ENCODE measurements at regions of chr1 and their contacts with region 1.

Region 1: GRCh38 chr1:212791676-212792395 is at the starts of genes NSL1 and TATDN3:
- DNase-seq: peak; percentile 94
- H3K4me3 Mint-ChIP-seq: peak within 1 kb of the TSS; percentile 99
- H3K27ac Mint-ChIP-seq: peak within 1 kb of the TSS; percentile 90
- H3K4me1 Mint-ChIP-seq: peaks cover 33% of the 10 kb centered on the region
- H3K27me3 Mint-ChIP-seq: no peaks in the 10 kb centered on the region
- total RNA-seq, gene NSL1: 21.2 to 23.7 TPM
- total RNA-seq, gene TATDN3: 14.9 to 16.9 TPM

Region 2: DNA sequence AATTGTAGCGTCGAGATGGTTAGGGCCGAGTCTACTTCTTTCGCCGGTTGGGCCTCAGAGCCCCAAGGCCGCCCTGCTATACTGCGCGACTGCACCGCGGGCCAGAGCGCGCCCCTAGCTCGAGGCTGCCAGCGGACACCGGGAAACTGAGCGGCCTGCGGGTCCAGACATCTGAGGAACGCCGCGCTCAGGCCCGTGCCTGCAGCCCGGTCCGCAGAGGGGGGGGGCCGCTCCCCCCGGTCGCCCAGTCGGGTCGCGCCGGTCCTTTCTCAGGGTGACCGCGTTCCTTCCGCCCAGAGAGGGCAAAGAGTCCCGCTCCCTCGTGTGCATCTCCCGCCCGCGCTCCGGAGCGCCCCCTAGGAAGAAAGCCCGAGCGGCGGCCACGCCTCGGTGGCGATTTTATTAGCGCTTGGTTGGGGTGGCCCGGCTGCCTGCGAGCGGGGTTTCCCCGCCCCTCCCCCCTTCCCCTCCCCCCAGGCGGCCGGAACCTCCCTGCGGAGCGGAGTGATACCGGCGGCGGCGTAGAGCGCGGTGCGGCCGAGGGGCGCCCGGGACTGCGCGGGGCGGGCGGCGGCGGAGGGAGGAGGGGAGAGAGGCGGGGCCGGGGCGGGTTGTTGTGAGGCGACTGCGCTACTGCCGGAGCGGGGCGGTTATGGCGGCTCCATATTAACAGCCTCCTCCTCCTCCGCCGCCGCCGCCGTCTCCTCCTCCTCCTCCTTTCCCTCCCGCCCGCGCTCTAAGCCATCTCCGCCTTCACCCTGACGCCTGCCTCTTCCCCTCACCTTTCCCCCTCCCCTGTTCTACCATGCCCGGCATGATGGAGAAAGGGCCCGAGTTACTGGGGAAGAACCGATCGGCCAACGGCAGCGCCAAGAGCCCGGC is 1532.8 kb before region 1 on chr1 and contains the start of gene RCOR3:
- CTCF ChIA-PET with region 1: no interaction called
- intact Hi-C with region 1: loop called (anchors 5 kb)
- DNase-seq: peak; percentile 93
- H3K4me3 Mint-ChIP-seq: peak within 1 kb of the TSS; percentile 90
- H3K27ac Mint-ChIP-seq: peak within 1 kb of the TSS; percentile 96
- H3K4me1 Mint-ChIP-seq: peaks cover 16% of the 10 kb centered on the region
- H3K27me3 Mint-ChIP-seq: no peaks in the 10 kb centered on the region
- total RNA-seq, gene RCOR3: 28.9 to 30.8 TPM

Region 3: DNA sequence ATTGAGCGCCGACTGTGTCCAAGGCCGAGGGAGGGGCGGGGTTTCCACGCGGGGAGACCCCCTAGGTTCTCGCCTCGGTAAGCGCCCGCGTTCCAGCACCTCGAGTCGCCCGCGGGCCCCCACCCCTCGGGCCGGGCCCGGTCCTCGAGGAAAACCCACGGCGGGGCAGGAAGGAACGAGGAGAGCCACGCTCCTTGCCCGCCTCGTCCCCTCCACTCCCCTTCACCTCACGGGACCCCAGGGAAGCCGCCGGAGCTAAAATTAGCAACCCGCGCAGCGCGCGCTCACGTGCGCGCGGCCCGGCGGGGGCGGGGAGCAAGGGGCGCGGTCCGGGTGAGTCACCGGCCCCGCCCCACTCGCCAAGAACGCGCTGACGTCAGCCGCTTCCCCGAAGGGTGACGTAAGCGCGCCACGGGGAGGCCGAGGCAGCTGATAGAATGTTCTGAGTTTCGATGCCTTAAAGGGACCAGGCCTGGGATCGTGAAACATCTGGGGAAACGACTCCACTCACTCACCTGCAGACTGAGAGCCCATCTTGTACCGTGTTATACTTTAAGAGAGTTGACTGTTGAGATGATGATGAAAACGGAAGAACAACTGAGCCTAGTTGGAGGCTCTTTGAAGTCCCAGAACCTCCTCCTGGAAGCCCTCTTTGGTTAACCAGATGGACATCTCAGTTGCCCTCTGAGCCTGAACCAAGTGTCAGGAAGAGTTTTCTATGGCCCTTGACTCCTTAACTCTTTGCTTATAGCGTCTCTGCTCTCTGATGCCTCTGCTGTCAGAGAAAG is 232.9 kb before region 1 on chr1:
- CTCF ChIA-PET with region 1: no interaction called
- intact Hi-C with region 1: loop called (anchors 2 kb)
- DNase-seq: peak; percentile 94
- H3K4me3 Mint-ChIP-seq: peak overlapping the region; percentile 66
- H3K27ac Mint-ChIP-seq: peak overlapping the region; percentile 92
- H3K4me1 Mint-ChIP-seq: peaks cover 13% of the 10 kb centered on the region
- H3K27me3 Mint-ChIP-seq: peaks cover 12% of the 10 kb centered on the region

Region 4: DNA sequence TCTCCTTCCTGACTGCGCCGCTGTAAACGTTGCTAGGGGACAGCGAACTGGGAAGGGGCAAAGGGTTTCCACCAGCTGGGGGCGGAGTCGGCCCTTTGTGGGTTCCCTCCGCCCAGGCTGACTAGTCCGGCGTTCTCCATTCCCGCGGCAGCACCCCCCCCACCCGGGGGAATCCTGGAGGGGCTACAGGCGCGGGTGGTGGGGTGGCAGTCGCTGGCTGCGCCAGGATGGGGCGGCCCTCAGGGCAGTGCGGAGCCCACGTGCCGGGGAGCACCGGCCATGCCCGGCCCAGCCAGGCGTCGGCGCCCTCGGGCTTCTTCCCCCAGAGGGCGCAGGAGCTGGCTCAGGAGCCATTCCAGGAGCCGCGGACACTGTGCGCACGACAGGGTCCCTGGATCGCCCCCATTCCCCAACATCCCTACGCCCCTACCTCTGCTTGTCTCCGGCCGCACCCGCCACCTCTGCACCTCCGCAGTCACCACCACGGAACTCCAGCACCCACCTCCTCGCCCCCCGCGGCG is 92.7 kb before region 1 on chr1:
- CTCF ChIA-PET with region 1: interaction called, 5 read pairs
- intact Hi-C with region 1: loop called (anchors 2 kb)
- DNase-seq: peak; percentile 67
- H3K4me3 Mint-ChIP-seq: peak overlapping the region; percentile 87
- H3K27ac Mint-ChIP-seq: no peak overlapping the region
- H3K4me1 Mint-ChIP-seq: peaks cover 38% of the 10 kb centered on the region
- H3K27me3 Mint-ChIP-seq: peaks cover 11% of the 10 kb centered on the region

Region 5: GRCh38 chr1:212857992-212858460 is 66.2 kb after region 1 on chr1 and contains the start of gene FLVCR1:
- CTCF ChIA-PET with region 1: interaction called, 3 read pairs
- intact Hi-C with region 1: loop called (anchors 1 kb)
- DNase-seq: peak; percentile 98
- H3K4me3 Mint-ChIP-seq: peak within 1 kb of the TSS; percentile 97
- H3K27ac Mint-ChIP-seq: peak within 1 kb of the TSS; percentile 88
- H3K4me1 Mint-ChIP-seq: peaks cover 11% of the 10 kb centered on the region
- H3K27me3 Mint-ChIP-seq: no peaks in the 10 kb centered on the region
- total RNA-seq, gene FLVCR1: 6.0 to 7.3 TPM

Region 6: DNA sequence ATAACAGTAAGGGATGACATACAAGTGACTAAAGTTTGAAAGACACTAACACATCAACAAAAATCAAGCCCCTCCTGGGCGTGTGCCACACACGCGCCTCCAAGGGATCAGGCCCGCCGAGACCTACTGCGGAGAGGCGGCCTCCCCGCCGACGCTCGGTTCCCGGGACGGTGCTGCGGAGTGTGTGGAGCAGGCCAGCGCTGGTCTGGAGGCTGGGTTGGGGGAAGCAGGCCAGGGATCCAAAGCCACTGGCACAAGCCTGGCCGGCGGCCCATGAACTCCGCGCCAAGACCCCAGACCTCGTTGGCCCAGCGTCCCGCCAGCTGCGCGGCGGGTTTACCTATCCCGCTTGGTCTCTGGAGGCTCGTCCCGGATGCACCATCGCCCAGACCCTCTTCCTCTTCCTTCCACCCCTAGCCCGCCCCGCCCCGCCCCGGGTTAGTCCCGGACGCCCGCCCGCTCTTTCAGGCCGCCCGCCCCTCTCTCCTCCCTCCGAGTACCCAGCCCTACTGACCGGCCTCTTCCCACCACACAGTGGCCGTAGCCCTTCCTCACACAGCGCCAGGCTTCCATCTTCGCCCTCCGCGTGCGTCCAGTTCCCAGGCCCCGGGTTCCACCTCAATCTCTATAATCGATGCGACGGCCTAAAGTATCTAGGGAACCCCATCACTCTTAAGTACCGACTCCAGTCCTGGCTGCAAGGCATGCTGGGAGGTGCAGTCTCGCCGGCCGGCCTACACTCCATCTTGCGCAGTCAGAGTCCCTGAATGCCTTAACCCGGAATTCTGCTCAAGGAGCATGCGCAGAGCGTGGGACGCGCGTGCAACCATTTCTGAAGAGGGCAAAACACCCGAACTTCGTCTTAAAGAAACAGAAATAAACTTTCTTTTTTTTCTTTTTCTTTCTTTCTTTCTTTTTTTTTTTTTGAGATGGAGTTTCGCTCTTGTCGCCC is 223.5 kb after region 1 on chr1 and contains the start of gene ANGEL2:
- CTCF ChIA-PET with region 1: interaction called, 4 read pairs
- intact Hi-C with region 1: loop called (anchors 1 kb)
- DNase-seq: peak; percentile 97
- H3K4me3 Mint-ChIP-seq: peak within 1 kb of the TSS; percentile 100
- H3K27ac Mint-ChIP-seq: peak within 1 kb of the TSS; percentile 99
- H3K4me1 Mint-ChIP-seq: peaks cover 27% of the 10 kb centered on the region
- H3K27me3 Mint-ChIP-seq: no peaks in the 10 kb centered on the region
- total RNA-seq, gene ANGEL2: 39.5 to 42.9 TPM

Measured in activated naive CD4-positive, alpha-beta T cell treated with anti-CD3 and anti-CD28 coated beads for 36 hours (primary cell).